Transverse colon (tissue), 4 donors: ENCODE measurements at regions of chr3 and their contacts with region 1.

Region 1: DNA sequence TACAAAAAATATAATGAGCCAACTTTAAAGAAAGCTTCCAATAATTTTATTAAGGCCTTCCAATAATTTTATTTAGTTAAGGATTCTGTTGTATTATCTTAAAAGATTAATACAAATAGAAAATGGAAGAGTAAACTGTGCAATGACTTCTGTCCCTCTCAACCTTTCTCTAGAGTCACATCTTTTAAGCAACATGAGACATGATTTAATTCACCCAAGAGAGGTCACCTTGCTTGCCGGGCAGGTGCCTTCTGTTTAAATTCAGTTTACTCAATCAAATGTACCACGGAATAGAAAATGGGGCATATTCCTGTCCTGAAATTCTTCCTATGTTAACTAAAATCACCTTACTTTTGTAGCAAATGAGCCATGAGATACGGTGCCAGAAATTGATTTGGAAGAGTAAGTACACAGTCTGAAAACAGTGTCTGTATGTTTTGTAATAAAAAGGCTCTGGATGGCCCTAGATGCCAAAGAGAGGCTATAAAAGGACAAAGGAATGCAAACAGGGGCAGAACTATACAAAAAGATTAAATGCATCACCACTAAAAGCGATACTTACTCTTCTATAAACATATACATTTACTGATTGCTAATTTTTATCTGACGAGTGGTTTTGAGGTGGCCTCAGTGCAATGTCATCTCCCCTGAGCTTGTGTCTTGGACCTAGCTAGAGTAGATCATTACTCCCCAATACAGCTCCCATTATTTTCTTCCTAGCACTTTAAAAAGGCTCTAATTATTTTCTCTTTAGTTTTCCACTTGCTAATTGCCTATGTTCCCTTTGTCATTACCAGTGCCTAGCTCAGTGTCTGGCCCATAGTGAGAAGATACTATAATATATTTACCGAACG is 134.0 kb downstream of the FHIT start:
- DNase-seq: no peak
- H3K4me3 ChIP-seq: no peak overlapping the region
- H3K27ac ChIP-seq: no peak overlapping the region
- H3K4me1 ChIP-seq: no peaks in the 10 kb centered on the region
- H3K27me3 ChIP-seq: no peaks in the 10 kb centered on the region
- CTCF ChIP-seq: no peak
- EP300 ChIP-seq: no peak
- POLR2A ChIP-seq: no peak

Region 2: DNA sequence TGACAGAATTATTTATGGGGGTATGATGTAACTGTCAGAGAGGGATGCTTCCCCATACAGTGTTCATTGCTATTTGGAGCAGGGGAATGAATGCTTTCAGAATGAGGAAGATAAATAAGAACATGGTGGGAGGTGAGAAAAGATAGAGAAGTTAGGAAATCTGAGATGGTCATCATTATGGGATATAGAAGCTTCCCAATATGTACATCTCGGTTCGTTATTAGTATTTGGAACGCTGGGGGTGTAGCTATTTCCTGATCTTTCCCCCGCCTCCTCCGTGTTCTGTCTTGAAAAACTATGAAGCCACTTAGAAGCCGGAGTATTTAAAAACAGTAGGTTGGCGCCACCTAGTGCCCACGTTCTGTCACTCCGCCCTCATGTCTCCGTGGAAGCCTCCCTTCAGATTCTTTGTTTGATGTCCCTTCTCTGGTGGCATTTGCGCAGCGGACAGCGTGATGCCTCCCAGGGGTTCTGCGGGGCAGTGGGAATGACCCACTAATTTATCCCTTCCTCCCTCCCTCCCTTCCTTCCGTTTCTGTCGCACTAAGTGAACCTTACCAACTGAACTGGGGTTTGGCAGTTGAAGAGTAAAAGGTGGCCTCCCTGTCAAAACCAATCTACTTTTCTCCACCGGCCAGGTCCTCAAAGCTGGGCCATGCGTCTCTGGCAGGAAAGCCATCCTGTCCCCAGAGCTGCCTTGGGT is 1071.6 kb after region 1 on chr3:
- in situ Hi-C with region 1: no loop called
- intact Hi-C with region 1: no loop called
- DNase-seq: peak; percentile 76
- H3K4me3 ChIP-seq: no peak overlapping the region
- H3K27ac ChIP-seq: no peak overlapping the region
- H3K4me1 ChIP-seq: no peaks in the 10 kb centered on the region
- H3K27me3 ChIP-seq: no peaks in the 10 kb centered on the region
- CTCF ChIP-seq: peak; percentile 79 to 84 (median 81)
- EP300 ChIP-seq: no peak
- POLR2A ChIP-seq: no peak

Region 3: DNA sequence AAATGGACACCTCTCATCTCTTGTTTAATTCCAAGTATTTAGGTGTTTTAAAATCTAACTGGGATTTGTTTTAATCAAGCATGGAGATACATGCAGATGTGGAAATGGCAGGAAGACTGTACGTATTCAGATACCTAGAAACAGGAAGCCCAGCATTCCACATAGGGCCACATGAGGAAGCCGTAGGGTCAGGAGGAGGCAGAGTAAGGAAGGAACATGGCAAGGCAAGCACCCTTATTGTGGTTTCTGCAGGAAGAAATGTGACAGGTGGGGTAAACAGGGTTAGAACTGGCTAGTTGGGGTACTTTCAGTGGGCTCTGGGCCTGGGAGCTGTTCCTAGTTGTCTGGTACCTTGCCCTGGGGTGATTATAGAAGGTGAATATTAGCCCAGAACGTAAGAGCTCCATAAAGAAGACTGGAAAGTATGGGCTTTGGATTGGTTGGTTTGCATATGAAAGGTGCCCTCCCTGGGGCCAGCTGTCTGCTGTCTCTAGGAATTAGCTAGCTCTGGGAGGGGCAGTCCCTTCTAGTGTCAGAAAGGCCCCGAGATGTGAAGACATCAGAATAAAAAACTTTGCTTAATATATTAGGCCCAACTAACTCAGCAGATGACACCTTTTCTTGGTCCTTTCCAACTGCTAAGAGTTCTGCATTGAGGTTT is 1865.7 kb after region 1 on chr3:
- in situ Hi-C with region 1: no loop called
- intact Hi-C with region 1: loop called (anchors 5 kb)
- DNase-seq: no peak
- H3K4me3 ChIP-seq: no peak overlapping the region
- H3K27ac ChIP-seq: no peak overlapping the region
- H3K4me1 ChIP-seq: no peaks in the 10 kb centered on the region
- H3K27me3 ChIP-seq: no peaks in the 10 kb centered on the region
- CTCF ChIP-seq: no peak
- EP300 ChIP-seq: no peak
- POLR2A ChIP-seq: no peak